Prostate gland (tissue), 2 donors: ENCODE measurements at regions of chr17 and their contacts with region 1.

Region 1: DNA sequence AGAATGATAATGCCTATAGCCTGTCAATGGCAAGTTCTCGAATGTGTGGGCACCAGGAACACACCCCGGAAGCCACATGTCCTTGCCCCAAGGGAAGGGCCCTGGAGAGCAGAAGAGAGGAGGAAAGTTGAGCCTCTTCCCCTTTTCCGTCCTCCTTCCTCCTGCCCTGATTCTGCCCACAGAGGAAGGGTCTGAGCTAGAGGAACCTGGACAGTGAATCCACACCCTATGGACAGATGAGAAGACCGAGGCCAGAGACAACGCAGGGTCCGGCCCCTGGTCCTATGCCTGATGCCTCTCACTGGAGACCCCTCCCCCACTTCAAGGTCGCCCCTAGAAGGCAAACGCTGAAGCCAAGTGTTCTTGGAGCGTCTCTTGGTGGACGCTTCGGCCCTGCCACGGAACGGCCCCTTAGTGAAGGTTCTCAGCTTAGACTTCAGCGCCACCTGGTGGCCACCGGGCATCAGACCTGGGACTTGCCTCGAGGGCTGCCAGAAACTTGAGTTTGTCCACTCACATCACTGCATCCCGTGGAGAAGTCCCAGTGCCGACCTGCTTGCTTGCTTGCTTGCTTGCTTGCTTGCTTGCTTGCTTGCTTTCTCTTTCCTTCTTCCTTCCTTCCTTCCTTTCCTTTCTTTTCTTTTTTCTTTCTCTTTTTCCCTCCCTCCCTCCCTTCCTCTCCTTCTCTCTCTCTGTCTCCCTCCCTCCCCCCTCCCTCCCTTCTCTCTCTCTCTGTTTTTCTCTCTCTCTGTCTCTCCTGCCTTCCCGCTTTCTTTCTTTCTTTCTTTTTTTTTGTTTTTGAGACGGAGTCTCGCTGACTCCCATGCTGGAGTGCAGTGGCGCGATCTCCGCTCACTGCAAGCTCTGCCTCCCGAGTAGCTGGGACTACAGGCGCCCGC is 20.6 kb upstream of the SPNS3 start:
- DNase-seq: peak; percentile 86
- H3K4me3 ChIP-seq: no peak overlapping the region
- H3K27ac ChIP-seq: no peak overlapping the region
- H3K4me1 ChIP-seq: no peaks in the 10 kb centered on the region
- H3K27me3 ChIP-seq: no peaks in the 10 kb centered on the region
- CTCF ChIP-seq: peak; percentile 71 to 94 (median 94)
- POLR2A ChIP-seq: no peak

Region 2: DNA sequence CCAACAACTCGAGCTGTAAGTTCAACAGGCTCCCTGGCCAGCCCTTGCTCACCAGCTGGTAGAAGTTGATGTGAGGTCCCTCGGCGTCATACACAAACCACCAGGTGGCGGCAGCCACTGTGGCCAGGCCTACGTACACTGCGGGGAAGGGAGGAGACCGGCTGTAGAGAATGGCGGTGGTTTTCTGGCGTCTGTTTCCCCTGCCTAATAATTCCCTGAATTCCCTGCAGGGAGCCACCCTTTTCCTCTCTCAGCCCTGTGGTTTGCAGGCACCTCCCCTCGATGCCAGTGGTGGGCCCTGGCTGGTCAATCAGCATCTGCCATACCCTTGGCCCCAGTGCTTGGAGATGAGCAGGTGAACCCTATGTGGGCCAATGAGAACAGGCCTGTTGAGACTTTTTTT is 478.0 kb before region 1 on chr17:
- intact Hi-C with region 1: no loop called
- DNase-seq: peak; percentile 81
- H3K4me3 ChIP-seq: no peak overlapping the region
- H3K27ac ChIP-seq: no peak overlapping the region
- H3K4me1 ChIP-seq: no peaks in the 10 kb centered on the region
- H3K27me3 ChIP-seq: no peaks in the 10 kb centered on the region
- CTCF ChIP-seq: peak; percentile 75 to 91 (median 84)
- POLR2A ChIP-seq: no peak

Region 3: GRCh38 chr17:4199818-4200402 is 213.3 kb before region 1 on chr17:
- intact Hi-C with region 1: loop called (anchors 5 kb)
- DNase-seq: no peak
- H3K4me3 ChIP-seq: no peak overlapping the region
- H3K27ac ChIP-seq: no peak overlapping the region
- H3K4me1 ChIP-seq: peaks cover 3% of the 10 kb centered on the region
- H3K27me3 ChIP-seq: no peaks in the 10 kb centered on the region
- CTCF ChIP-seq: peak in 3 of 4 experiments; percentile 40 to 52 (median 46)
- POLR2A ChIP-seq: no peak

Region 4: GRCh38 chr17:4220655-4221054 is 192.5 kb before region 1 on chr17:
- intact Hi-C with region 1: loop called (anchors 2 kb)
- DNase-seq: peak; percentile 20
- H3K4me3 ChIP-seq: no peak overlapping the region
- H3K27ac ChIP-seq: peak overlapping the region; percentile 15 to 28
- H3K4me1 ChIP-seq: no peaks in the 10 kb centered on the region
- H3K27me3 ChIP-seq: no peaks in the 10 kb centered on the region
- CTCF ChIP-seq: no peak
- POLR2A ChIP-seq: no peak

Region 5: DNA sequence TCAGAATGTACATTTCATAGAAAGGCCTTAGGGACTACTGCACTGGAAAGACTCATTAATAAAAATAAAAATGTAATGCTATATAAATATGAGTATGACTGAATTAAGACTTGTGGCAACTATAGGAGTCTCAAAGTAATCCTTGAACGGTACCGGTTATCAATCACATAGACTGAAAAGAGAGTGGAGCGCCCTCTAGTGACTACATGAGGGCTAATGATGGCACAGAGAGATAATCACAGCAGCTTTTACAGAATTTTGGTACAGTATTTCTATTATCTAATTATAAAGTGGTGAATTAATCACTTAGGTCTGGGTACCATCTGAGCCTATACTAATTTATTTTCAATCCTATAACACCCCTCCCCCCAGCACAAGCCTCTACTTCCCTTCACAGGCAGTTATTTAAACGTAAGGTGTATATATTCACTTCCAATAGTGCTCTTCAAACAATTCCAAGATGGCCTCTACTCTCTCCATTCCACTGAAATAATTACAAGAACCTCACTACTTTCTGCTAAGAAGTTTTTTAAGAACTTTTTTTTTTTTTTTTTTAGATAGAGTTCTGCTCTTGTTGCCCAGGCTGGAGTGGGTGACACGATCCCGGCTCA is 108.7 kb before region 1 on chr17:
- intact Hi-C with region 1: loop called (anchors 10 kb)
- DNase-seq: peak; percentile 39
- H3K4me3 ChIP-seq: no peak overlapping the region
- H3K27ac ChIP-seq: no peak overlapping the region
- H3K4me1 ChIP-seq: no peaks in the 10 kb centered on the region
- H3K27me3 ChIP-seq: no peaks in the 10 kb centered on the region
- CTCF ChIP-seq: peak; percentile 41 to 58 (median 56)
- POLR2A ChIP-seq: no peak

Region 6: GRCh38 chr17:4366327-4367063 is 46.7 kb before region 1 on chr17 and contains the start of gene UBE2G1:
- intact Hi-C with region 1: loop called (anchors 10 kb)
- DNase-seq: peak; percentile 96
- H3K4me3 ChIP-seq: peak within 1 kb of the TSS; percentile 67 to 100
- H3K27ac ChIP-seq: peak within 1 kb of the TSS; percentile 87 to 96
- H3K4me1 ChIP-seq: no peaks in the 10 kb centered on the region
- H3K27me3 ChIP-seq: no peaks in the 10 kb centered on the region
- CTCF ChIP-seq: peak in 3 of 4 experiments; percentile 22 to 44 (median 39)
- POLR2A ChIP-seq: peak; percentile 95
- total RNA-seq, gene UBE2G1: 54.1 to 59.3 TPM

Region 7: DNA sequence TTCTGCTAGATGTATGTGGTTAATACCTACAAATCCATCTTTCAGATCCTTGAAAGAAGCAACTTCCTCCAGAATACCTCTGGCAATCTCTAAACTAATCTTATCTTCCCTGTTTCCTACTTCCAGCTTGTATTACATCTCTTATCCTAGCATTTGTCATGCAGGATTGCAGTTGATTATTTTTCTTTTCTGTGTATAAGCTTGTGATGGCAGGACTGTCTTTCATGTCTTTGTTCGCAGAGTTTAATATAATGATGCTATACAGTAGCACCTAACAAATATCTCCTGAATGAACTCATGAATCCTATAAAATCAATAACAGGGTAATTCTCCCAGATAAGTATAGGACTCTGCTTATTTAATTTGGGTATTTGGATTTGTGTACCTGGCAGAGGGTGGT is 34.6 kb before region 1 on chr17:
- intact Hi-C with region 1: no loop called
- DNase-seq: no peak
- H3K4me3 ChIP-seq: no peak overlapping the region
- H3K27ac ChIP-seq: no peak overlapping the region
- H3K4me1 ChIP-seq: no peaks in the 10 kb centered on the region
- H3K27me3 ChIP-seq: no peaks in the 10 kb centered on the region
- CTCF ChIP-seq: no peak
- POLR2A ChIP-seq: no peak